ENCODE measurements at regions of chrX and their contacts with region 1.

Region 1: DNA sequence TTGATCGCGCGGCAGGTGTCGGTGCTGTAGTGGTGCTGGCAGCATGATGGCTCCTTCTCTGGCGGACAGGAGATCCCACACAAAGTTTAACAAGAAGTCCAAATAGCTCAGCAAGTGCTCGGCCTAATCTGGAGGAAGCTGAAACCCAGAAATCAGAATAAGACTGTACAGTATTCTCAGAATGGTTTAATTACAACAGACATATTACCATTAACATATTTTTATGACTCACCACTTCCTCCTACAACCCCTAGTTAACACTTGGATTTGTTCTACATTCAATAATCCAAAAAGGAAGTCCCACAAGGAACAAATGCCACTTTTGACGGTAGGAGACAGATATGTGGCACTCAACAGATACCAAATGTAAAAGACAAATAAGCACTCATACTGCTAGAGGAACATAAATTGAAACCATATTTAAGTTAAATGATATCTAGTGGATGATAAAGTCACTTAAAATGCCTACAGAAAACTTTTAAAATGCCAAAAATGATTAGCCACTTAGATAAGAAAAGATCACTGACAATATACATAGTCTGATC is 91.2 kb downstream of the HUWE1 start:
- DNase-seq: no peak
- ATAC-seq: no peak
- H3K4me3 ChIP-seq: no peak overlapping the region
- H3K27ac ChIP-seq: peak overlapping the region; percentile 45; the same call in 1 of the 2 replicates
- H3K4me1 ChIP-seq: peaks cover 3% of the 10 kb centered on the region
- H3K27me3 ChIP-seq: peaks cover 4% of the 10 kb centered on the region; the same call in 1 of the 2 replicates
- CTCF ChIP-seq: no peak
- POLR2A ChIP-seq: no peak
- RAD21 ChIP-seq: no peak

Region 2: GRCh38 chrX:53631156-53631555 is 35.8 kb after region 1 on chrX:
- CTCF ChIA-PET with region 1: no interaction called
- POLR2A ChIA-PET with region 1: no interaction called
- dilution Hi-C with region 1: no loop called
- in situ Hi-C with region 1: no loop called
- intact Hi-C with region 1: loop called (anchors 5 kb)
- DNase-seq: peak; percentile 41
- ATAC-seq: peak; percentile 57
- H3K4me3 ChIP-seq: no peak overlapping the region
- H3K27ac ChIP-seq: no peak overlapping the region; the same call in 1 of the 2 replicates
- H3K4me1 ChIP-seq: peaks cover 10% of the 10 kb centered on the region
- H3K27me3 ChIP-seq: peaks cover 3% of the 10 kb centered on the region
- CTCF ChIP-seq: no peak
- POLR2A ChIP-seq: no peak
- RAD21 ChIP-seq: no peak

Region 3: GRCh38 chrX:53654376-53654775 is 59.0 kb after region 1 on chrX:
- CTCF ChIA-PET with region 1: no interaction called
- POLR2A ChIA-PET with region 1: no interaction called
- dilution Hi-C with region 1: no loop called
- in situ Hi-C with region 1: no loop called
- intact Hi-C with region 1: no loop called
- DNase-seq: peak; percentile 37
- ATAC-seq: peak; percentile 64
- H3K4me3 ChIP-seq: no peak overlapping the region
- H3K27ac ChIP-seq: no peak overlapping the region; the same call in 1 of the 2 replicates
- H3K4me1 ChIP-seq: no peaks in the 10 kb centered on the region
- H3K27me3 ChIP-seq: 0 out of 2 replicates have a peak, but pooled peaks cover 2% of the 10 kb centered on the region
- CTCF ChIP-seq: no peak
- POLR2A ChIP-seq: no peak
- RAD21 ChIP-seq: no peak

Region 4: DNA sequence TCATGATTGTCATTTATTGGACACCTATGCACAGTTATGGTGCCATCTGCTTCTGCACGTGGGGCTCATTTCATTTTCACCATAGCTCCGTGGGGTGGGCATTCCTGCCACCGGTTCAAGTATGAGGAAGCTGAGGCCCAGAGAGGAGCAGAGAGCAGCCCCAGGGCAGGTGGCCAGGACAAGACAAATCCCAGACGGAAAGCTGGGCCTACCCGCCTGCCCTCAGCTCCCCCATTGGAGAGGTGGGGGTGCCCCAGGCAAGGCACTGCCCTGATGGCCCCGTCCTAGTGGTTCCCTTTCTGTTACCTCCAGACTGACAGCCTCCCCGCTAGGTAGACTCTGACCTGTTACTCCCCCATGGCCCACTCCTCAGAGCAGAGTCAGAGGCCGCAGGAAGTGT is 164.8 kb after region 1 on chrX:
- CTCF ChIA-PET with region 1: no interaction called
- POLR2A ChIA-PET with region 1: no interaction called
- dilution Hi-C with region 1: no loop called
- in situ Hi-C with region 1: no loop called
- intact Hi-C with region 1: no loop called
- DNase-seq: no peak
- ATAC-seq: no peak
- H3K4me3 ChIP-seq: no peak overlapping the region
- H3K27ac ChIP-seq: no peak overlapping the region
- H3K4me1 ChIP-seq: no peaks in the 10 kb centered on the region
- H3K27me3 ChIP-seq: peaks cover 5% of the 10 kb centered on the region; the same call in 1 of the 2 replicates
- CTCF ChIP-seq: no peak
- POLR2A ChIP-seq: no peak
- RAD21 ChIP-seq: no peak

Measured in IMR-90 (cell line).